Right ventricle myocardium superior (tissue), 1 donor: ENCODE measurements at regions of chr17 and their contacts with region 1.

Region 1: GRCh38 chr17:19766422-19767270 is 18.5 kb upstream of the ALDH3A1 start:
- DNase-seq: peak; percentile 89
- ATAC-seq: peak; percentile 95

Region 2: GRCh38 chr17:19362277-19363113 is 404.2 kb before region 1 on chr17 and contains the start of gene B9D1:
- intact Hi-C with region 1: loop called (anchors 5 kb)
- DNase-seq: peak; percentile 95
- ATAC-seq: peak; percentile 98
- total RNA-seq, gene B9D1: 6.8 TPM

Region 3: GRCh38 chr17:19513897-19514488 is 252.7 kb before region 1 on chr17:
- intact Hi-C with region 1: loop called (anchors 2 kb)
- DNase-seq: peak; percentile 78
- ATAC-seq: peak; percentile 86